Calu3 (cell line): ENCODE measurements at regions of chr3 and their contacts with region 1.

Region 1: DNA sequence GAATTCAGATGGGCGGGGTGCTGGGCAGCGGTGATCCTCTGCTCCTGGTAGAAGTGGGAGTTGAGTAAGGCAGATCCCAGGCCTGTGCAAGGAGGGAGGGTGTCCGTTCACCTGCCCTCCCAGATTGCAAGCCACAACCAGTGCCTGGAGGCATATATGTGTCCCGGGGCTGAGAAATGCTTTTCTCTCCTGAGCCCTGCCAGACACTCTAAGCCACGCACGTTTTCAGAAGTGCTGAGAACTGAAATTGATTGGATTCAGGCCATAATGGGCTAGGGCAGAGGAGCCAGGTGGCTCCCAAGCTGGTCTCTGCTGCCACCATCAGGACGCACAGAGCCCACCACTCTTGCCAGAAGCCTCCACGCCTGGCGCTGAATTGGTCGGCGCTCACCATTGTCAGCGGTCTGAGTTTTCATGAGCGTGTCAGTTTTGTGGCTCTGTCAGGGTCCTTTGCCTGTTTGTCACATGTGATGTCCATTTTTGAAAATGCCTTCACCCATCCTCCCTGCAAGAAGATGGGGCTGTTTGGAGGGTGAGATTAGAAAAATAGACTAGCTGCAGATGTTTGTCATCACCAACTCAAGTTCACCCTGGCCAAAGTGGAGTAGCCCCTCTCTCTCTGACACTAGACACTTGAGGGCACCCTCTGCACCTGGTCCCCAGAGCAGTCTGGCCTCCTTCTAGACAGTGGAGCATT is 15.4 kb upstream of the BFSP2 start:
- DNase-seq: peak; percentile 86
- H3K4me3 Mint-ChIP-seq: no peak overlapping the region
- H3K27ac Mint-ChIP-seq: no peak overlapping the region
- H3K4me1 Mint-ChIP-seq: peaks cover 34% of the 10 kb centered on the region
- H3K27me3 Mint-ChIP-seq: peaks cover 68% of the 10 kb centered on the region
- CTCF ChIP-seq: peak; percentile 96

Region 2: GRCh38 chr3:132535575-132536441 is 848.7 kb before region 1 on chr3:
- CTCF ChIA-PET with region 1: no interaction called
- intact Hi-C with region 1: loop called (anchors 5 kb)
- DNase-seq: peak; percentile 73
- H3K4me3 Mint-ChIP-seq: no peak overlapping the region
- H3K27ac Mint-ChIP-seq: no peak overlapping the region
- H3K4me1 Mint-ChIP-seq: no peaks in the 10 kb centered on the region
- H3K27me3 Mint-ChIP-seq: no peaks in the 10 kb centered on the region
- CTCF ChIP-seq: peak; percentile 84

Region 3: GRCh38 chr3:132730891-132731580 is 653.4 kb before region 1 on chr3:
- CTCF ChIA-PET with region 1: interaction called, 31 read pairs
- intact Hi-C with region 1: loop called (anchors 1 kb)
- DNase-seq: peak; percentile 48
- H3K4me3 Mint-ChIP-seq: no peak overlapping the region
- H3K27ac Mint-ChIP-seq: no peak overlapping the region
- H3K4me1 Mint-ChIP-seq: no peaks in the 10 kb centered on the region
- H3K27me3 Mint-ChIP-seq: peaks cover 65% of the 10 kb centered on the region
- CTCF ChIP-seq: peak; percentile 52

Region 4: DNA sequence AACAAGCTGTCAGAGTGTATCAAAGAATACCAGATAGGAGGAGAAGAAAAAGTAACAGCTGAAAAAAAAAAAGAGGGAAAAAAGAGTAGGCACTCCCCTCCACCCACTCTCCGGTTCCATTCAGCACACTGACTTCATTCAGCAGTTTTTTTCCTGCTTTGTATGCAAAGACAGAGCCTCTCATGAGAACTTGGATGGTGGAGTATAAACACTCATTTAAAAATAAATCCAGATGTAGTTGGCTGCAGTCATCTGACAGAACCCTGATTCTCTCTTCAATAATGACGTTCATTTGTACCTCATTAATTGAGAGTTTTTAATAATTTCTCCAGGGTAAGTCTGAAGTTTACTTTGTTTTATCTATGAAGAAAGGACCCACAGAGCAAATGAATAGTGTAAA is 265.3 kb before region 1 on chr3:
- CTCF ChIA-PET with region 1: no interaction called
- intact Hi-C with region 1: loop called (anchors 5 kb)
- DNase-seq: no peak
- H3K4me3 Mint-ChIP-seq: no peak overlapping the region
- H3K27ac Mint-ChIP-seq: no peak overlapping the region
- H3K4me1 Mint-ChIP-seq: no peaks in the 10 kb centered on the region
- H3K27me3 Mint-ChIP-seq: peaks cover 49% of the 10 kb centered on the region
- CTCF ChIP-seq: no peak

Region 5: DNA sequence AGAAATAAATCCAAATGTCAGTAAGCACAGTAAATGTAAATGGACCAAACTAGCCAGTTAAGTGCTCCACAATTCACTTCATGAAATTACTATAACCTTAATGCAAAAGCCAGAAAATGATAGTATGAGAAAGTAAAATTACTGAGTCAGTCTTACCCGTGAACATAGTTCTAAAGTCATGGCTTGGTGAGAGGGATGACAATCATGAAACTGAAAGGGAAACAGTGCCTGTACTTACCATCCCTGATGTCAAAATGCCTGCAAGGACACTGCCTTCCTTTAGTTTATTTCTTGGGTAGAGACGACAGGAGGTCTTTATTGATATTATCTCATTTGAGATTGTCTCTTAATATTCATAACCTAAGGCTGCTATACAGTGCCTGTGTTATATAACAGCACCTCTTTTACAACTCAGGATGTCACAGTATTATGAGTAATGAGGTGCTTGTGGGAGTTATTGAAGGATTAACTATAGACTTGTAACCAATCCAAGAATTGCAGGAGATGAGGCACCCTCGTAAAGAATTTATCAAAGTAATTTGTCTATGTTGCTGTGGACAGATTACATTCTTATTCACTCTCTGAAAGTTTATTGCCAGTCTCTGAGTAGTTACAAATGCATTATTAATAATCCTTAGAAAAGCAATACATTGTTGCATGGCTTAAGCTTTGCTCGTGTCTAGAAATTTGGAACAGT is 127.5 kb before region 1 on chr3:
- CTCF ChIA-PET with region 1: interaction called, 3 read pairs
- intact Hi-C with region 1: loop called (anchors 5 kb)
- DNase-seq: no peak
- H3K4me3 Mint-ChIP-seq: no peak overlapping the region
- H3K27ac Mint-ChIP-seq: no peak overlapping the region
- H3K4me1 Mint-ChIP-seq: no peaks in the 10 kb centered on the region
- H3K27me3 Mint-ChIP-seq: peaks cover 42% of the 10 kb centered on the region
- CTCF ChIP-seq: no peak

Region 6: DNA sequence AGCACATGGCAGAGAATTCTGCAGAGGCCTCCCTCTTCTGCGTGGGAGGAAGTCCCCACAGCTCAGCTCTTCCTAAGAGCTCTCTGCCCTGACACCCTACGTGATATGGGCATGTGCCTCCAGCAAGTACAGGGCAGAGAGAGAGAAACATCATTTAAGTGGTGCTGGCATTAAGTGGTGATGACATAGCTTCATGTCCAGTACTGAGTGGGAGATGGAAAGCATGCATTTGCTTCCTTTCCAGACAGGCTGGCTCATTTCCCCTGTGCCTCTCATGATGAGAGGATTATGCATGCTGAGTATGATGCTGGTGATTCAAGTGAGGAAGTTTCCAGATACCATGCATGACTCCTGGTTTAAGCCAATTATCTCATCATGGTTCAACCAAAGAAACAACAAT is 42.2 kb after region 1 on chr3:
- CTCF ChIA-PET with region 1: no interaction called
- intact Hi-C with region 1: loop called (anchors 1 kb)
- DNase-seq: no peak
- H3K4me3 Mint-ChIP-seq: no peak overlapping the region
- H3K27ac Mint-ChIP-seq: no peak overlapping the region
- H3K4me1 Mint-ChIP-seq: no peaks in the 10 kb centered on the region
- H3K27me3 Mint-ChIP-seq: peaks cover 68% of the 10 kb centered on the region
- CTCF ChIP-seq: no peak

Region 7: GRCh38 chr3:133578548-133579191 is 194.2 kb after region 1 on chr3:
- CTCF ChIA-PET with region 1: no interaction called
- intact Hi-C with region 1: loop called (anchors 5 kb)
- DNase-seq: peak; percentile 51
- H3K4me3 Mint-ChIP-seq: peak overlapping the region; percentile 95
- H3K27ac Mint-ChIP-seq: no peak overlapping the region
- H3K4me1 Mint-ChIP-seq: peaks cover 50% of the 10 kb centered on the region
- H3K27me3 Mint-ChIP-seq: no peaks in the 10 kb centered on the region
- CTCF ChIP-seq: peak; percentile 78